ENCODE measurements at regions of chr17 and their contacts with region 1.

Region 1: GRCh38 chr17:72191921-72192799 is 71.3 kb downstream of the SOX9 start:
- DNase-seq: no peak
- H3K4me3 ChIP-seq: no peak overlapping the region
- H3K27ac ChIP-seq: peak overlapping the region in 1 of 2 donors; percentile 43
- H3K4me1 ChIP-seq: no peaks in the 10 kb centered on the region
- H3K27me3 ChIP-seq: no peaks in the 10 kb centered on the region
- CTCF ChIP-seq: no peak
- POLR2A ChIP-seq: no peak

Region 2: GRCh38 chr17:71883845-71884244 is 308.3 kb before region 1 on chr17:
- intact Hi-C with region 1: no loop called
- DNase-seq: no peak
- H3K4me3 ChIP-seq: no peak overlapping the region
- H3K27ac ChIP-seq: no peak overlapping the region
- H3K4me1 ChIP-seq: no peaks in the 10 kb centered on the region
- H3K27me3 ChIP-seq: no peaks in the 10 kb centered on the region
- CTCF ChIP-seq: no peak
- POLR2A ChIP-seq: no peak

Region 3: DNA sequence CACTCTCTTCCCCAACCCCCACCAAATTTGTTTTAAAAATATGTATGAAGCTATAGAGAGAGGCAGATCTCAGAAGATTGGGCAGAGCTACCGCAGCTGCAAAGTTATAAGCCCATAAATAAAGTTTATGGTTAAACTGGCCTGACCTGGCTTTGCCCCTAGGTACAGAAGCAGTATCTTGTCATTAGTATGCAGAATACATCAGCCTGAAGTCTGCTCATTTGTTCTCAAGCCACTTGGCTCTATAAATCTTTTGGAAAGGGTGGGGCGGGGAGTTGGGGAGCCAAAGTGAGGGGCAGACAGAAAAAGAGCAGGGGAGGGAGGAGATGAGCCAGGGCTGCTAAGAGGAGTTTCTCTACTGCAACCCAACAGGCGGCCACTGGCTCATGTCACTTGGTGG is 41.8 kb after region 1 on chr17:
- intact Hi-C with region 1: loop called (anchors 2 kb)
- DNase-seq: no peak
- H3K4me3 ChIP-seq: no peak overlapping the region
- H3K27ac ChIP-seq: no peak overlapping the region
- H3K4me1 ChIP-seq: no peaks in the 10 kb centered on the region
- H3K27me3 ChIP-seq: no peaks in the 10 kb centered on the region
- CTCF ChIP-seq: no peak
- POLR2A ChIP-seq: no peak

Measured in breast epithelium (tissue), 4 donors.